ENCODE measurements at regions of chr9 and their contacts with region 1.

Region 1: DNA sequence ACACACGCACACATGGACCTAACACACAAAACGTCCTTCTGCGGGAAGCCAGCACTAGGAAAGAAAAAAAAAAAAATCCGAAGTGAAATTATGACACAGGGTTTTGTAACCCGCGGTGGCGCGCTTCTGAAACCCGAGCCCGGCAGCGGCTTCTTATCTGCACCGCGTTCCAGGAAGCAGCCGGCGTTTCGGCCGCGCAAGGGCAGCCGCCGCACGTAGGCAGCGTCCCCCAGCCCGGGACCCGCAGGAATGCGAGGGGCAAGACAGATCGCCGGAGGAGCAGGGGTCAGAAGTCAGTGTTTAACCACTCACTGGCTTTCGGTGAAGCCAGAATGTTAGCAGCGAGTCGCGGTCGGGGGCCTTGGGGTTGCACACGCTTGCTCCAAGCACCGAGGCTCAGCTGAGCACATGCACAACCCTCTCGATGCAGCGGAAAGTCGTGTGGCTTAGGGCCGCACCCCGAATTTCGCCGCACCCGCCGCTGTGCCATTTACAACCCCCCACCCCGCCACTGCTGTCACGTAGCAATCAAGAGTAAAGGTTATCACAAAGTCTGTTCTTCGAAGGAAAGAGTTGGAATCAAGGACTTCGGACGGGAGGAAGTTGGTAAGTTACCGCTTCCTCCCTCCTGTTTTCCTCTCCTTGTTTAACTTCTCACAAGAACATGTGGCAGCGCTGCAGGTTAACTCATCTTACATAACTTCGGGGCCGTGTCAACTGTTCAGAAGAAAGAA is 167.9 kb downstream of the AUH start:
- DNase-seq: no peak
- H3K4me3 ChIP-seq: peak overlapping the region; percentile 39 to 43
- H3K27ac ChIP-seq: peak overlapping the region; percentile 95
- H3K4me1 ChIP-seq: peaks cover 71% of the 10 kb centered on the region
- H3K27me3 ChIP-seq: no peaks in the 10 kb centered on the region
- CTCF ChIP-seq: no peak
- POLR2A ChIP-seq: peak in 1 of 2 donors; percentile 46

Region 2: DNA sequence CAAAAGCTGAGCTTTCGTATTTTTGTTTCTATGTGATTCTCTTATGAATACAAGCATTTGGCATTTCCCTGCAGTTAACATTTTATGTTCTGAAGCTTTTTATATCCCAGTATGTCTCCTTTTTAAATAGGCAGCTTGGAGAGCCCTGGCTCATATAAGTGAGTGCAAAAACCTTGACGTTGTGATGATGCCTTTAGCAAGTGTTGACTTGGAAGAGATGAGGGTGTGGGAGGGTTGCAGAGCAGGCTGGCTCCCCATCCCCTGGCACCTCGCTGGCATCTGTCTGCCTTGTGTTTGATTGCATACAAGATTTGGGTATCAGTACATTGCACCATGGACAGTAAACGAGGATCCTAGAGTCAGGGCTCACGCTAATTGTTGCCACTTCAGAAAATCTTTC is 509.1 kb before region 1 on chr9:
- intact Hi-C with region 1: no loop called
- DNase-seq: no peak
- H3K4me3 ChIP-seq: no peak overlapping the region
- H3K27ac ChIP-seq: no peak overlapping the region
- H3K4me1 ChIP-seq: no peaks in the 10 kb centered on the region
- H3K27me3 ChIP-seq: no peaks in the 10 kb centered on the region
- CTCF ChIP-seq: no peak
- POLR2A ChIP-seq: no peak

Region 3: DNA sequence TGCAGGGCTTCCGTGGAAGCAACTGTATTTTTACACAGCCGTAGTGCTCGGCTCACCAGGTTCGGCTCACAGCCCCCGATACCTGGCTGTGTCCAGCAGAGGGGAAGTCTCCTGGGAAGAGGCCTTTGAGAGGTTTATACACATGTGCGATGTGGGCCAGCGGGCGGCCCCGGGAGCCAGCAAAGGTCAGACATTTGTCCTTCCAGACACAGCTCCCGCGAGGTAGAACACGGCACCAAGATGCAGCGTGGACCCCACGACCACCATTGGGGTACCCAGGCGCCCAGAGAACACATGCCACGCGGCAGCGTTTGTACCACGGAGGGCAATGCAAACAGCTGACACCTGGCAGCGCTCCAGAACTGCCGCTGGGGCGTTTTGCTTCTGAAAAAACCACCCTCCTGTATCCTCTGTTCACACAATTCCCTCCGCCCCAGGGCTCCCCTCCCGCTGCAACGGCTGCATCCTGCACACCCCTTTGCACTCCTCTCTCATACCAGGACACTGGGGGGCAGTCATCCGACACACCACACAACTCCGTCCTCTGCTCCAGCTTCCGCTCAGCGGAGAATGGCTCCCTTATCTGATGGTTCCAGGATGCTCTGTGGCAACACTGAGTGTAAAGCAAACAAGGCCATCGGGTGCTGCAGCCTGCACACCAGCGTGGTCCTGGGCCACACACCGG is 156.9 kb before region 1 on chr9:
- intact Hi-C with region 1: loop called (anchors 5 kb)
- DNase-seq: no peak
- H3K4me3 ChIP-seq: no peak overlapping the region
- H3K27ac ChIP-seq: peak overlapping the region; percentile 78
- H3K4me1 ChIP-seq: peaks cover 27% of the 10 kb centered on the region
- H3K27me3 ChIP-seq: no peaks in the 10 kb centered on the region
- CTCF ChIP-seq: peak in 2 of 3 experiments; percentile 6 to 61
- POLR2A ChIP-seq: no peak

Region 4: DNA sequence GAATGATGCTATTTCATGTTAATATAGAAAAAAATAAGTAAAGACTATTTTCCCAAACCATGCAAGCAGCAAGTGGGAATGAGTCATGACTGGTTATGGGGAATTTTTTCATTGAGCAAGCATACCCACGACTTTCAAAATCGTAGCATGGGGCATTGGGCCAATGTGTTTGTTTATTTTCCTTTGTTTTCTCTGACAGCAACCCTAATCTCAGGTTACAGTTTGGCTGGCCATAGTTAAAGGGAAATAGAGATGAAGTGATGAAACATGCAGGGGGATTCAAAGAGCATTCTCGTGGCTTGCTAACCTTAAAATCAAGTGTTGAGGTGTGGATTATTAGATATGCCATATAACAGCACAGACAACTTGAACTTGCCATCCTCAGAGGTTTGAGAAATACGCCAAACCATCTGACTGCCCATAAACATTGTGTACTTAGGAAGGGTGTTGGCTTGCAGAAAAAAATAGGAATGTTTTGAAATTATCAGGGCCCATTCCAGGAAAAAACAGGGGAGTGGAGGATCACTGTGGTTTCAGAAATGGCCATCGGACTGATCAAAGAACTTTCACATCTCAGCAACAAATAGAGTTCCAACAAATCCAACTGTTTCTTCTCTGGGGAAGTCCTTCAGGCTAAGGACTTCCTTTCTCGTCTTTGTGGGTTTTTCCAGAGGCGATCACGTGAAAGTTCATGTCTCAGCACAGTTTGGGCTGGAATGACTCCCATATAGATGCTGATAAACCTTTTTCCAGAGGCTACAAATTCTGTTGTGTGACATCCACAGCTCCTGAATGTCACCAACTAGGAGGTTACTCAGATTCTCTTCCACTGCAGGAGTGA is 133.1 kb before region 1 on chr9:
- intact Hi-C with region 1: loop called (anchors 5 kb)
- DNase-seq: peak; percentile 25 to 95
- H3K4me3 ChIP-seq: no peak overlapping the region
- H3K27ac ChIP-seq: peak overlapping the region; percentile 70
- H3K4me1 ChIP-seq: peaks cover 32% of the 10 kb centered on the region
- H3K27me3 ChIP-seq: no peaks in the 10 kb centered on the region
- CTCF ChIP-seq: no peak
- POLR2A ChIP-seq: no peak

Region 5: GRCh38 chr9:91101611-91102168 is 92.1 kb before region 1 on chr9:
- intact Hi-C with region 1: loop called (anchors 10 kb)
- DNase-seq: no peak
- H3K4me3 ChIP-seq: no peak overlapping the region
- H3K27ac ChIP-seq: peak overlapping the region; percentile 81
- H3K4me1 ChIP-seq: peaks cover 36% of the 10 kb centered on the region
- H3K27me3 ChIP-seq: no peaks in the 10 kb centered on the region
- CTCF ChIP-seq: no peak
- POLR2A ChIP-seq: no peak

Region 6: DNA sequence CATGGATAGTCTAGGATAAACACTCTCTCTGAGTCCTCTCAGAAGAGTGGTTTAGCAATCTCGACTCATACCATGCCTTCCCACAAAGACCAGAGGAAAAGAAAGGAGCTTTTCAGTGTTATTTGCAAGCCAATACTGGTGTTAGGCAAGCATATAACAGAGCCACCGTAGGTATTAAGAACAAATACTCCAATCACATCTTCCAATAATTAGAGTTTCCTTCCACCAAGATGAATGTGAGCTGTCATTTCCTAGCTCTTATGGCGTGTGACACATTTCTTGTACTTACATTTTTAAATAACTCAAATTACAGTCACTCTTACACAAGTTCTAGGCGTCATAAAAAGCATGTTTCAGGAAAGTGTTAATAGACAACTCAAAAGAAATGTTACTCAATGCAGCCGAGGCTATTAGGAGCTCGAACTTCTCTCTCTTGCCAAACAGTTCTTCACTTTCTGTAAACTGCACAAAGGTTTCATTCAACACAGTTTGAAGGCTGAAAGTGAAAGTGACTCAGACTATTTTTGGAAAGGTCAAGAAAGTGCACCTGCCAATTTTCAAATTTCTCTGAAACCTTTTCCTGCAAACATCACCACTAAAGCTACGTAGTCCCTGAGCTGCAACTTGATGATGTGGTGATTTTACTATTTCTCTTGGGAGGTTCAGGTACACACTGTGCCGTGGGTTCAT is 14.0 kb after region 1 on chr9:
- intact Hi-C with region 1: no loop called
- DNase-seq: no peak
- H3K4me3 ChIP-seq: no peak overlapping the region
- H3K27ac ChIP-seq: peak overlapping the region; percentile 60
- H3K4me1 ChIP-seq: peaks cover 22% of the 10 kb centered on the region
- H3K27me3 ChIP-seq: no peaks in the 10 kb centered on the region
- CTCF ChIP-seq: no peak
- POLR2A ChIP-seq: no peak

Region 7: DNA sequence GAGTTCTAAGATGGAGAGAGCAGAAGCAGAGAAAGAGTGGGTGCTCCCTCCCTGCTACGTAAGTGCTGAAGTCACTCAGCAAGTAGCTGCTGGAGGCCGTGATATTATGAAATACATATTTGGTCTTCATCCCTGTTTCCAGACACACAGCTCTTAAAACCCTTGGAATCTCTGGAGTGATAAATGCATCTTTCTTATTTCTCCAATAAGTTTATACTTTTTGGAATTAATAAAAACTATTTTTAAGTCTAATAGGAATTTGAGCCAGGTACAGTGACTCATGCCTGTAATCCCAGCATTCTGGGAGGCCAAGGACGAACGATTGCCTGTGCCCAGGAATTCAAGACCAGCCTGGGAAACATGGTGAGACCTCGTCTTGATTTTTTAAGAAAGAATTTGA is 107.3 kb after region 1 on chr9:
- intact Hi-C with region 1: loop called (anchors 5 kb)
- DNase-seq: no peak
- H3K4me3 ChIP-seq: no peak overlapping the region
- H3K27ac ChIP-seq: peak overlapping the region; percentile 54
- H3K4me1 ChIP-seq: peaks cover 56% of the 10 kb centered on the region
- H3K27me3 ChIP-seq: no peaks in the 10 kb centered on the region
- CTCF ChIP-seq: no peak
- POLR2A ChIP-seq: no peak

Region 8: DNA sequence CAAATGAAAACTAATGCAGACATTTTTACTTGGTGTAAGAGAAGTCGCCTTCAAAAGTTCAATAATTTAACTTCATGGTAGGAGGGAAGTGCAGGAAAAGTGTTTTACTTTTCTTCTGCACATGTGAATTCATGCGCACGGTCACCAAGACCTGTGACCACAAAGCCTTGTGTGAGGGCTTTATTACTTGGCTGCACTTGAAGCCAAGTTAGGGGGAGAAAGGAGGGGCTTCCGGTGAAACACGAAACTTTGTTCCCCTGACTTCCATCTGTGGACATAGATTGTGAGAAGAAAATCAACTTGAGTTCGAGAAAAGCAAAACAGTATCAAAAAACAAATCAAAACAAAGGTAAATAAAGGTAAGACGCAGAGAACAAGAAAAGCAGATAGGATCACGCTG is 516.3 kb after region 1 on chr9:
- intact Hi-C with region 1: no loop called
- DNase-seq: no peak
- H3K4me3 ChIP-seq: no peak overlapping the region
- H3K27ac ChIP-seq: no peak overlapping the region
- H3K4me1 ChIP-seq: peaks cover 7% of the 10 kb centered on the region
- H3K27me3 ChIP-seq: no peaks in the 10 kb centered on the region
- CTCF ChIP-seq: no peak
- POLR2A ChIP-seq: no peak

Measured in vagina (tissue), 2 donors.